ENCODE measurements at regions of chr1 and their contacts with region 1.

Region 1: DNA sequence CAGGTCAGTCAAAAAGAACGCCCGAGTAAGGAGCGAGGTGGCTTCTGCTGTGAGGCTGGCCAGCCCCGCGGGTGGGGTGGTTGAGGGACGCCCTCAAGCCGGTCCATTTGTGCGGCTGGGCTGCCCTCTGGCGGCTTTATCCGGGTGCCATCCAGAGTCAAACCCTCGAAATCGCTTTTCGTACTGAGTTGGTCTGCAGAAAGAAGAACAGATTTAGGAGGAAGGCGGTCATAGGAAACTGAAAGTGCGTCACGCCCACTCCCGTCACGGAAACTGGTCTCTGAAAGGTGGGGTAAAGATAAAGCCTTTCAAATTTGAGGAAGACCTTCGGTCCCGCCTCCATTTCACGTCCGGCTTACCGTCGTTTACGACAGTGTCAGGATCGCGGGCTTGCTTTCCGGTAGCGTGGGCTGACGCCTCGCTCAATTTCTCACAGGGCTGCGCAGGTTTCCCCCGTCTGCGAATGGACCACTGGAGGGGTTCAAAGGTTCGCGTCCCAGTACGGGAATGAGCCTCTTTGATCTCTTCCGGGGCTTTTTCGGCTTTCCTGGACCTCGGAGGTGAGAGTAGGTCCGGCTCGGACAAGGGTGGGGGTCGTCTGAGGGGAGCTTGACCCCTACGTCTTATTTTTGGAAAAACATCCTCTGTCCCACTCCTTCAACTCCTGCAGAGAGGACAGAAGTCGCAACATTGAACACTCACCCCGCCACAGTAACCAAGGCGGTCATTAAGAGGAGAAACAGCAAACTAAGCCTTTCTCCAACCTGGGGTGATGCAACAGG is at the start of gene HAX1:
- DNase-seq: peak; percentile 99
- ATAC-seq: peak; percentile 95
- H3K4me3 Mint-ChIP-seq: peak within 1 kb of the TSS; percentile 99
- H3K27ac Mint-ChIP-seq: peak within 1 kb of the TSS; percentile 99
- H3K4me1 Mint-ChIP-seq: peaks cover 37% of the 10 kb centered on the region
- H3K27me3 Mint-ChIP-seq: no peaks in the 10 kb centered on the region
- total RNA-seq, gene HAX1: 177 to 225 TPM

Region 2: DNA sequence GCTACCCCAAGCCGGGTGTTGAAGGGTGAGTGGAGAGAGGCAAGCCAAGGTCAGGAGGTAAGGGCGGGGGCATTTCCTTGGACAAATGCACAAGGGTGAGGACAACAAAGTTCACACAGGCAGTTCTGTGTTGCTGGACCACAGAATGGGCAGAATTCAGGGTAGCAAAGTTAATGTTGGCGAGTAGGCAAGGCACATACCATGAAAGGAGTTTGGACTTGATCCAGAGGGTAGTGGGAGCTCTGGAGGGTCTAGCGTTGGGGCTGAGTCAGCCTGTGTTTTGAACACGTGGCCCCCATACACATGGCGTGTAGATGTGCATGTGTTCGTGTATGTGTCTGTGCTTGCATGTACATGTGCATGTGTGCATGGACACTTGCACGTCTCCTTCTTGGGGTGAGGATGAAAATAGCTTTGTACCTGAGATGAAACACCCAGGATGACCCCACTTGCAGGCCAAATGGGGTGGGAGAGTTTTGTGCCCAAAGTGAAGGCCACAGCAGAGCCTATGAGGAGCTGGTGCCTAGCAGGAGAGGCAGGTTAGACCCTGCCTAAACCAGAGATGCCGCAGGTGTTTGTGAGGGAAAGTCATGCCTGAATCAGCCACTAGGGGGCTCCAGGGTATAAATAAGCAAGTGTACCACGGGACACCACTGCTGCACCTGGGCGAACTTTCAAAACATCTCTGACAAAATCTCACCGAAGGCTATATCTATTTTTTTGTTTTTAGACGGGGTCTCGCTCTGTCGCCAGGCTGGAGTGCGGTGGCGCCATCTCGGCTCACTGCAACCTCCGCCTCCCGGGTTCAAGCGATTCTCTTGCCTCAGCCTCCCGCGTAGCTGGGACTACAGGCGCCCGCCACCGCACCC is 475.4 kb before region 1 on chr1:
- CTCF ChIA-PET with region 1: no interaction called
- POLR2A ChIA-PET with region 1: no interaction called
- intact Hi-C with region 1: loop called in 1 of 2 experiments (anchors 1 kb)
- DNase-seq: peak; percentile 92
- ATAC-seq: peak; percentile 92
- H3K4me3 Mint-ChIP-seq: no peak overlapping the region
- H3K27ac Mint-ChIP-seq: peak overlapping the region; percentile 38
- H3K4me1 Mint-ChIP-seq: no peaks in the 10 kb centered on the region
- H3K27me3 Mint-ChIP-seq: no peaks in the 10 kb centered on the region

Region 3: GRCh38 chr1:154170547-154171222 is 101.7 kb before region 1 on chr1:
- CTCF ChIA-PET with region 1: interaction called, 4 read pairs
- POLR2A ChIA-PET with region 1: no interaction called
- intact Hi-C with region 1: loop called in 1 of 2 experiments (anchors 1 kb)
- DNase-seq: peak; percentile 83
- ATAC-seq: peak; percentile 97
- H3K4me3 Mint-ChIP-seq: peak overlapping the region; percentile 27
- H3K27ac Mint-ChIP-seq: peak overlapping the region; percentile 86
- H3K4me1 Mint-ChIP-seq: peaks cover 53% of the 10 kb centered on the region
- H3K27me3 Mint-ChIP-seq: no peaks in the 10 kb centered on the region

Region 4: DNA sequence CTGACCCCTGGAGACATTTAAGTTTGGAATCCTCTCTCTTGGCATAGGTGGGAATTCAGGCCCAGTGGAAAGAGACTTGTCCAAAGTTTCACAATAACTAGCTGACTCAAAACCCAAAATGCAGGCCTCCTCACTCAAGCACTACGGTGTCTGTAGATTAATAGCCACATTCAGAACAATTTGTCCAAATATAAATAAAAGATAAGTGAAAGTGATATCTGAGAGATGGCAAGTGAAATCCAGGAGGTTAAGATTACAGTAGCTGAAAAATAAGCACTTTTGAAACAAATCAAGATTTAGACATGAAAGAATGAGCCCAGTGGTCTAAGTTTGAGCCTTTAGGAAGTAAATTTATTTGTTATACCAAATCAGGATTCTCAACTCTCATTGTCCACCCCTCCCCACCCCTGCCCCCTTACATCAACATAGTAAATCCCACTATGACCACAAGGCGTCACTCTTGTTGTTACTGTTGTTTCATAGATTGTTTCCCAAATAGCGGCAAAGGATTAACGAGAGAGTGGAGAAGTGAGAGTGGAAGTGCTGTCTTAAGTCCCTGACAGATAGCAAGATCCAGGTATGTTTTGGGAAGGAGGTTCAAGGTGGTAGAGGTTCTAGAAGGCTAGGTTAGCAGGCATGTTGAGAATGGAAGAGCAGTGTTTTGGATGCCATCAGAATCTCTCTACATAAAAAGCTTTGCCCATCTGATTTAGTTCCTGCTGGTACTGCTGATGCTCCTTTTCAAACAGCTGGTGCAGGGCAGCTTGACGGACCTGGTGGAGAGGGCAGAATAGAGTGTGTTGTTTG is 73.4 kb before region 1 on chr1:
- CTCF ChIA-PET with region 1: interaction called, 27 read pairs
- POLR2A ChIA-PET with region 1: no interaction called
- intact Hi-C with region 1: loop called (anchors 1 kb)
- DNase-seq: peak; percentile 62
- ATAC-seq: peak; percentile 77
- H3K4me3 Mint-ChIP-seq: no peak overlapping the region
- H3K27ac Mint-ChIP-seq: no peak overlapping the region
- H3K4me1 Mint-ChIP-seq: no peaks in the 10 kb centered on the region
- H3K27me3 Mint-ChIP-seq: peaks cover 3% of the 10 kb centered on the region

Region 5: GRCh38 chr1:154324669-154325582 is 52.5 kb after region 1 on chr1 and contains the start of gene ATP8B2:
- CTCF ChIA-PET with region 1: interaction called, 6 read pairs
- POLR2A ChIA-PET with region 1: no interaction called
- intact Hi-C with region 1: loop called in 1 of 2 experiments (anchors 1 kb)
- DNase-seq: peak; percentile 92
- ATAC-seq: peak; percentile 70
- H3K4me3 Mint-ChIP-seq: peak within 1 kb of the TSS; percentile 99
- H3K27ac Mint-ChIP-seq: peak within 1 kb of the TSS; percentile 94
- H3K4me1 Mint-ChIP-seq: peaks cover 39% of the 10 kb centered on the region
- H3K27me3 Mint-ChIP-seq: no peaks in the 10 kb centered on the region
- total RNA-seq, gene ATP8B2: 48.2 TPM